ENCODE measurements at regions of chr19 and their contacts with region 1.

Region 1: DNA sequence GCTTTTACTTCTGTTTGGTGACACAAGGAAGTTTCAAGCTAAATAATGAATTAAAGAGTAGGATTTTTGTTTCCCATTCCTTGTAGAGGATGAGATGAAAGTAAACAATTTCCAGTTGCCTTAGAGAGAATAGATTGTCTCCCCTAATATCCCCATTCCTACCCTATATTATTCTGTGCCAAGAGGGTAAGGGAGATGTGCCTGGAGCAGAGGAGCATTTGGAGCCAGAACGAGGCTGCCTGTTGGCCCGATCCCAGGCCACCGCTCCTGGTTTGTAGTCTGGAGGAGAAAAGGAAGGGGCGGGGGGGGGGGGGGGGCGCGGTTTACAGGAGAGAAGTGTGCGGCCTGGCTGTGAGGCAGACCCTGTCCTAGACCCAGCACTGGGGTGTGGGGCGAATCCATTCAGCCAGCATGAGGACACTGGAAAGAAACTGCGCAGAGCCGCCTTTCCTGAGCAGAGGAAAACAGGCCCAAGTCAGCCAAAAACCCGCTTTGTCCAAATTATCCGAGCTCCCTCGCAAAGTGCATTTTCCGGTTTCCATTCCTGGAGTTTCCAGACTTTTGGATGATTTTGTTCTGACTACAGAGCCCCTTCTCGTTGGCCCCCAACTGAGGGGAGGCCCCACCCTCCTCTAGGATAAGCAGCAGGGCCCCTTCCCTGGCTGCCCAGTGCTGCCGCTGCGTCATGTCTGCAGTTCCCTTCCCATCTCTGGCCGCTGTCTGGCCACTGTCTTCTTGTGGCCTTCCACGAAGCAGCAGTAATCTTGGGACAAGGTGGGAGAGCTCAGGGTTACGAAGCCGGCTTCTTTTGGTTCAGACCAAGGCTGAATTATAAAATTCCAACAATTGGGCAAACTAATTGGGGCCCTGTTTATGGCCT is 23.0 kb downstream of the NFIX start:
- DNase-seq: no peak
- H3K4me3 ChIP-seq: peak overlapping the region; percentile 5 to 24
- H3K27ac ChIP-seq: peak overlapping the region; percentile 99
- H3K4me1 ChIP-seq: peaks cover 93% of the 10 kb centered on the region
- H3K27me3 ChIP-seq: no peaks in the 10 kb centered on the region
- CTCF ChIP-seq: no peak
- POLR2A ChIP-seq: no peak

Region 2: GRCh38 chr19:12983542-12984142 is 34.6 kb before region 1 on chr19:
- intact Hi-C with region 1: no loop called
- DNase-seq: peak in 1 of 2 donors; percentile 89
- H3K4me3 ChIP-seq: peak overlapping the region; percentile 26 to 31
- H3K27ac ChIP-seq: no peak overlapping the region
- H3K4me1 ChIP-seq: peaks cover 21% of the 10 kb centered on the region
- H3K27me3 ChIP-seq: no peaks in the 10 kb centered on the region
- CTCF ChIP-seq: peak; percentile 94 to 99 (median 95)
- POLR2A ChIP-seq: no peak

Region 3: DNA sequence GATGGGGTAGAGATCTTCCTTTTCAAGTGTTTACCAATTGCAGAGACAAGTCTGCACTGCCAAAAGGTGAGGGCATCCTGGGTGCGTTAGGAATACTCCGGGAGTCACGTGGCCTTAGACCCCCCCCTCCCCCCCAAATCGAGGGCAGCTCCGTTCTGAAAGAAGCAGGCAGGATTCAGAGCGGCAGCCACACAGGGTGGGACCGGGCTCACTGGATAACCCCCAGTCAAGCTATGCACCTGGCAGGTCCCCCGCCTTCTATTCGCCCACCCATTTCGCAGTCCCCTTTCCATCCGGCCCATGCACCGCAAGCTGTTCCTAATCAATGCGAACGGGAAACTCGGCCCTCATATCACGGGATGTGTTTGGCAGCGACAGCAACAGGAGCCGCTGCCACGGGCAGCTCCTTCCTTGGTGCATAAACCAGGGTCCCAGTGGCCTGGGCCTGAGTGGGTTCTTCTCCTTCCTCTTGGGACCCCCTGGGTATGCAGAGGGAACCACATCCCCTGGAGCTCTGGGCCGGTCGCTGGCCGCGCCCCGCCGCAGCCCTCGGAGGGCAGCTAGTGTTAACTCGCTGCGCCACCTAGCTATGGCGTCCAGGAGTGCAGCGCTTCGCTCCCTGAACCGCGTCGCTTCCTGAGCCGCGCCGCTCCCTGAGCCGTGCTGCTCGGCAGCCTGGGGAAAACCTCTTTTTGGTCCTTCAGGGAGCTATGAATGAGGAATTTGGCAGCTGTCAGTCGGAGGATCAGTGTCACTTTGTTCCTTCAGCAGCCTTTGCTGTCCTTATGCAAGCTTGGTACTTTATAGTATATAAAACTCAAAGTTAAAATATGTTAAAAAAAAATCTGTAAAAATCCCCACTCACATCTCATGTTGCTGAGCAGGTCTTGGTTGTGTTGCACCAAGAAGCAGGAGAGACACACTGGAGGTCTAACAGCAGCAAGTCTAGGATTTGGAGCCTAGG is 43.0 kb after region 1 on chr19:
- intact Hi-C with region 1: loop called (anchors 5 kb)
- DNase-seq: no peak
- H3K4me3 ChIP-seq: peak overlapping the region; percentile 36 to 41
- H3K27ac ChIP-seq: peak overlapping the region; percentile 96
- H3K4me1 ChIP-seq: peaks cover 99% of the 10 kb centered on the region
- H3K27me3 ChIP-seq: no peaks in the 10 kb centered on the region
- CTCF ChIP-seq: peak; percentile 95 to 98 (median 97)
- POLR2A ChIP-seq: no peak